GM13977 (cell line): ENCODE measurements at regions of chrX and their contacts with region 1.

Region 1: DNA sequence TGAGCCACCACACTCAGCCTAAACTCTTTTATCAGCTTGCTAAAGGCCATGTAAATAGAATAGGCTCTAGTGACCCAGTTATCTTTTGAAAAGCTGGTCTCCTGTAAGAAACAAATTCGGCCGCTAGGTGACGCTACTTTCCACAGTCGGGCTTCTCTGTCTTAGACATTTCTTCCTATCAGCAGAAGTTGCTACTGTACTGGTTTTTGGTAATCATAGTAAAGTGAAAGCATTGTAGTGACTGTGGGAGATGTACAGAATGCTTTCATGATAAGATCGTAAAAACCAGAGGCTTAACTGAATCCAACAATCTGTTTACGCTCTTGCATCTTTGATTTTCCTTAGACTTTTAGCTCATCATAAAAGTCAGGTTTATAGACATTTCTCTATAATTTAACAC is 82.6 kb downstream of the GK start:
- DNase-seq: peak; percentile 67
- CTCF ChIP-seq: peak; percentile 79

Region 2: DNA sequence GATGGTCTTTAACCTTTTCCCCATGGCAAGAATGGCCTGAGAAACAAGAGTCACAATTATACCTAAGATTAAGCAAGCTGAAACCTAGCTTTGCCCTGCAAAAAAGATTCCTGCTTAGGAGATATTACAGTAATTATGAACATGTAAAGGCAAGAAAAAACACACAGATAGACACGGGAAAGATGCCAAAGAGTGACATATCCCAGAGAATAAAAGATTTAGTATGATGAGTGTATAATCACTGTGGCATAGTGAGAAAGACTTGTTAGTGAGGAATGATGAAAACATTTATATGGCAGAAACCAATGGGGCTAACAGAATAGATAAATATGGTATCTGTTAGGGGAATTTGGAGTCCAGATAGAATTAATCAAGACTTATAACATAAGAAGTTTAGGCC is 128.7 kb before region 1 on chrX:
- in situ Hi-C with region 1: no loop called
- DNase-seq: no peak
- CTCF ChIP-seq: no peak

Region 3: DNA sequence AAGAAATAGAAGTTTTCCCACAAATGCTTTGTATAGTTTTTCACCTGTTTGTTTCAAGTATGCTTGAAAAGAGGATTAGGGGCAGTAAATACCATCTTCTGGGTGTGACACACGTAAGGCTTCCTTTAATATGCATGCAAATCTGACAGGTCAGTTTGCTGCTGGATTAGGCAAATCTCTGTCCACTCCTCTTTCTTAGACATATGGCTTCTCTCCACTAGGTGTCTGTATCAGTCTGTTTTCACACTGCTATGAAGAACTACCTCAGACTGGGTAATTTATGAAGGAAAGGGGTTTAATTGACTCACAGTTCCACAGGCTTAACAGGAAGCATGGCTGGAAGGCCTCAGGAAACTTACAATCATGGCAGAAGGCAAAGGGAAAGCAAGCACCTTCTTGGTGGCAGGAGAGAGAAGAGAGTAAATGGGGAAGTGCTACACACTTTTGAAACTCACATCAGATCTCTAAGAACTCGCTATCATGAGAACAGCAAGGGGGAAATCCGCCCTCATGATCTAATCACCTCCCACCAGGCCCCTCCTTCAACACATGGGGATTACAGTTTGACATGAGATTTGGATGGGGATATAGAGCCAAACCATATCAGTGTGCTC is 86.3 kb after region 1 on chrX:
- in situ Hi-C with region 1: loop called (anchors 10 kb)
- DNase-seq: peak; percentile 23
- CTCF ChIP-seq: peak; percentile 16

Region 4: DNA sequence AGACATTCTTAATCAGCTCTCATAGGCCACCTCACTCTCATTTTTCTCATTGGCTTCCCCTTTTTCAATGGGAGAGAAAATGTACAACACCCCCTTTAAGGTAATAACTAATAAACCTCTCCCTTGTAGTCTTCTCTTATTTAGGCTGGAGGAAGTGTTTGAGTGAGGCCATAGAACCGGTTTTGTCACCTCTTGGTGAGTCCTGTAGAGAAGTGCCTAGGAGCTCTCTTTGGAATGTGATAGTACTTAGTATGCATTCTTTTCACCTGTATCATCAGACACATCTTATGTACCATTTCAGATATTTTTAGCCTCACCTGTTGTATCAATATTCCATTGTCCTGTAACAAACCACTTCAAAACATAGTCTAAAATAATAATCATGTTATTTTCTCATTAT is 156.7 kb after region 1 on chrX:
- in situ Hi-C with region 1: no loop called
- DNase-seq: no peak
- CTCF ChIP-seq: no peak